IMR-90 (cell line): ENCODE measurements at regions of chr1 and their contacts with region 1.

Region 1: GRCh38 chr1:161292631-161293030 is 17.1 kb downstream of the MPZ start:
- DNase-seq: no peak
- ATAC-seq: no peak
- H3K4me3 ChIP-seq: no peak overlapping the region
- H3K27ac ChIP-seq: no peak overlapping the region
- H3K4me1 ChIP-seq: no peaks in the 10 kb centered on the region
- H3K27me3 ChIP-seq: peaks cover 2% of the 10 kb centered on the region
- CTCF ChIP-seq: no peak
- POLR2A ChIP-seq: no peak
- RAD21 ChIP-seq: no peak

Region 2: GRCh38 chr1:161192476-161193465 is 99.9 kb before region 1 on chr1:
- CTCF ChIA-PET with region 1: interaction called, 5 read pairs
- POLR2A ChIA-PET with region 1: no interaction called
- dilution Hi-C with region 1: no loop called
- in situ Hi-C with region 1: no loop called
- intact Hi-C with region 1: loop called (anchors 1 kb)
- DNase-seq: peak; percentile 65
- ATAC-seq: peak; percentile 92
- H3K4me3 ChIP-seq: no peak overlapping the region
- H3K27ac ChIP-seq: no peak overlapping the region
- H3K4me1 ChIP-seq: peaks cover 11% of the 10 kb centered on the region
- H3K27me3 ChIP-seq: no peaks in the 10 kb centered on the region
- CTCF ChIP-seq: peak; percentile 91
- POLR2A ChIP-seq: no peak
- RAD21 ChIP-seq: peak; percentile 80

Region 3: DNA sequence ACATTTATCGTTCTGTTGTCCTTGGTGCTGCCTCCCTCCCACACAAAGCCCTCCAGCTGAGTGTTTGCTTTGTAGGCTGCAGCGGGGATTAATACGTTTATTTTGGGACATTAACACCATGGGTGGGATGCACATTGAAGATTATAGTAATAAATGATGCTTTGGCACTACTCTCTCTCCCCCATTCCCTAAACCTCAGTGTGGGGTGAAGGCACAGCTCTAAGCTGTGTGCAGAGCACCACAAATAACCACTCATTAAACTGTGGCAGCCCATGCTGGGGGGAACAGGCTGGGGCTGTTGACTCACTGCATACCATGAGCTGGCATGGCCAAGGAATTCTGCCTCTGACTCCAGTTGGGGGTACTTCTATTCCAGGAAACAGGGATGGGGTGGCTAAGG is 26.4 kb before region 1 on chr1:
- CTCF ChIA-PET with region 1: no interaction called
- POLR2A ChIA-PET with region 1: no interaction called
- dilution Hi-C with region 1: no loop called
- in situ Hi-C with region 1: no loop called
- intact Hi-C with region 1: loop called (anchors 2 kb)
- DNase-seq: no peak
- ATAC-seq: no peak; the same call in 1 of the 2 replicates
- H3K4me3 ChIP-seq: no peak overlapping the region
- H3K27ac ChIP-seq: no peak overlapping the region
- H3K4me1 ChIP-seq: no peaks in the 10 kb centered on the region
- H3K27me3 ChIP-seq: peaks cover 7% of the 10 kb centered on the region
- CTCF ChIP-seq: no peak
- POLR2A ChIP-seq: no peak
- RAD21 ChIP-seq: no peak

Region 4: DNA sequence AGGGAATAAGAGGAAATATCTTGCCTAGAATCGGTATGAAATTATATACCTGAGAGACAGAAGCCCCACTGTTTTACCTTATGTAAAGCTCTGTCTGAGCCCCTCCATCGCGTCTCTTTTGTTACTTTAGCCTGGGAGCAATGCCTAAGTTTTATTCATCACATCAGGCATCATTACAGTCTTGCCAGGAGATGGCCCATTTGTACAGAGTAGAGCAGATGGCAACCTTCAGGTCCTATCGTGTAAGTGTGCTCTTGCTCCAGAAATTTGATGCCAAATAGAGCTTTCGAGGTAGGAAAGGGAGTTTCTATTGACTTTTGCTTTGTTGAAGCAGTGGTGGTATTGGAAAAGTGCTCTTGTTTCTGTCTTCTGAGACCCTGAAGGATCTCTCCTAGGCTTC is 50.2 kb after region 1 on chr1:
- CTCF ChIA-PET with region 1: no interaction called
- POLR2A ChIA-PET with region 1: no interaction called
- dilution Hi-C with region 1: no loop called
- in situ Hi-C with region 1: no loop called
- intact Hi-C with region 1: no loop called
- DNase-seq: no peak
- ATAC-seq: no peak
- H3K4me3 ChIP-seq: no peak overlapping the region
- H3K27ac ChIP-seq: no peak overlapping the region
- H3K4me1 ChIP-seq: no peaks in the 10 kb centered on the region
- H3K27me3 ChIP-seq: no peaks in the 10 kb centered on the region
- CTCF ChIP-seq: no peak
- POLR2A ChIP-seq: no peak
- RAD21 ChIP-seq: no peak

Region 5: GRCh38 chr1:161484613-161485012 is 192.0 kb after region 1 on chr1:
- CTCF ChIA-PET with region 1: no interaction called
- POLR2A ChIA-PET with region 1: no interaction called
- dilution Hi-C with region 1: no loop called
- in situ Hi-C with region 1: no loop called
- intact Hi-C with region 1: no loop called
- DNase-seq: no peak
- ATAC-seq: no peak
- H3K4me3 ChIP-seq: no peak overlapping the region
- H3K27ac ChIP-seq: no peak overlapping the region
- H3K4me1 ChIP-seq: peaks cover 2% of the 10 kb centered on the region; the same call in 1 of the 2 replicates
- H3K27me3 ChIP-seq: peaks cover 18% of the 10 kb centered on the region
- CTCF ChIP-seq: peak; percentile 45
- POLR2A ChIP-seq: no peak
- RAD21 ChIP-seq: peak; percentile 45

Region 6: GRCh38 chr1:162639718-162640117 is 1347.1 kb after region 1 on chr1:
- CTCF ChIA-PET with region 1: no interaction called
- POLR2A ChIA-PET with region 1: no interaction called
- dilution Hi-C with region 1: no loop called
- in situ Hi-C with region 1: no loop called
- intact Hi-C with region 1: no loop called
- DNase-seq: no peak
- ATAC-seq: no peak
- H3K4me3 ChIP-seq: no peak overlapping the region
- H3K27ac ChIP-seq: no peak overlapping the region
- H3K4me1 ChIP-seq: peaks cover 4% of the 10 kb centered on the region; the same call in 1 of the 2 replicates
- H3K27me3 ChIP-seq: no peaks in the 10 kb centered on the region
- CTCF ChIP-seq: no peak
- POLR2A ChIP-seq: no peak
- RAD21 ChIP-seq: no peak